Heart right ventricle (tissue), 16 donors: ENCODE measurements at regions of chr10 and their contacts with region 1.

Region 1: DNA sequence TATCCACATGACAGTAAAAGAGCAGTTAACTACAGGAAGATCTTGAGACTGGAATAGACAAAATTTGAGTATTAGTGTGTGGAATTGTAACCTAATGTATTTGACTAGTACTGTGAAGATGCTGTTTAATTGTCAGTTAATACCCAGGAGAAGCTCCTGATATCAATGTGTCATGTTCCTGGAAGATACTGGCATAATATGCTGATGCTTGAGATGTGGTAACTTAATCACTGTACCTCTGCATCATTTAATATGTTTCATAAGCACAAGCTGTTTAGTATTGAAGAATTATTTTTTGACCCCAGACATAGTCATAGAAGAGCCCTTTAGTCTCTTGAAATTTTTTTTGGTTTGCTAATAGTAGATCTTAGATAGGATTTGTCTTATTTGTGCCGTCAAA is 15.4 kb downstream of the CCSER2 start:
- DNase-seq: no peak
- ATAC-seq: no peak
- H3K4me3 ChIP-seq: no peak overlapping the region
- H3K27ac ChIP-seq: no peak overlapping the region
- H3K4me1 ChIP-seq: peaks cover 0 to 56% (median 34%) of the 10 kb centered on the region in 9 donors
- H3K27me3 ChIP-seq: no peaks in the 10 kb centered on the region
- CTCF ChIP-seq: no peak

Region 2: DNA sequence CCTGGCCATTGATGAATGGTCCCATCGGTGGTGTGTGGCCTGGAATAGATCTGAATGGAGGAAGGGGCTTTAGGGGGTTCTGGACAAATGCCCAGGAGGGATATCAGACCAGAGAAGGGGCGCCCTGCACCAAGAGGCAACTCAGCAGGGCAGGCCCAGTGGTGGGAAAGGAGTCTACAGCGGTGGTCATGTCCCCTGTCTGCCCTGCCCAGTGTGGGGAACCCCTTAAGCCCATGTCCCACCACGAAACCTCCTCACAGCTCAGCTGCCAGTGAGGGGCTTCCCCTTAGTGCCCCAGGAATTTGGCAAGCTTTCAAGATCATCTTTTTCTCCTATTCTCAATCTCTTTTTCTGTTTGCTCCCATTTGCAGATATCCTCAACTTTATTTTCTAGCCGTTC is 29.6 kb before region 1 on chr10:
- intact Hi-C with region 1: loop called in 1 of 10 experiments (anchors 1 kb)
- DNase-seq: no peak
- ATAC-seq: no peak
- H3K4me3 ChIP-seq: no peak overlapping the region
- H3K27ac ChIP-seq: no peak overlapping the region
- H3K4me1 ChIP-seq: peaks cover 0 to 18% (median 3%) of the 10 kb centered on the region in 9 donors
- H3K27me3 ChIP-seq: no peaks in the 10 kb centered on the region
- CTCF ChIP-seq: no peak